ENCODE measurements at regions of chr20 and their contacts with region 1.

Region 1: GRCh38 chr20:478949-479429 is 16.7 kb upstream of the TBC1D20 start:
- DNase-seq: peak in 1 of 10 donors; percentile 18
- H3K4me3 ChIP-seq: no peak overlapping the region
- H3K27ac ChIP-seq: peak overlapping the region in 8 of 59 donors; percentile 4 to 65 (median 16)
- H3K27me3 ChIP-seq: no peaks in the 10 kb centered on the region
- CTCF ChIP-seq: peak; percentile 45 to 87 (median 71)

Region 2: GRCh38 chr20:431012-431904 is 47.7 kb before region 1 on chr20:
- intact Hi-C with region 1: loop called (anchors 5 kb)
- DNase-seq: peak; percentile 69 to 94 (median 84)
- H3K4me3 ChIP-seq: no peak overlapping the region
- H3K27ac ChIP-seq: peak overlapping the region in 48 of 59 donors; percentile 2 to 81 (median 54)
- H3K27me3 ChIP-seq: no peaks in the 10 kb centered on the region
- CTCF ChIP-seq: peak; percentile 55 to 97 (median 88)

Region 3: DNA sequence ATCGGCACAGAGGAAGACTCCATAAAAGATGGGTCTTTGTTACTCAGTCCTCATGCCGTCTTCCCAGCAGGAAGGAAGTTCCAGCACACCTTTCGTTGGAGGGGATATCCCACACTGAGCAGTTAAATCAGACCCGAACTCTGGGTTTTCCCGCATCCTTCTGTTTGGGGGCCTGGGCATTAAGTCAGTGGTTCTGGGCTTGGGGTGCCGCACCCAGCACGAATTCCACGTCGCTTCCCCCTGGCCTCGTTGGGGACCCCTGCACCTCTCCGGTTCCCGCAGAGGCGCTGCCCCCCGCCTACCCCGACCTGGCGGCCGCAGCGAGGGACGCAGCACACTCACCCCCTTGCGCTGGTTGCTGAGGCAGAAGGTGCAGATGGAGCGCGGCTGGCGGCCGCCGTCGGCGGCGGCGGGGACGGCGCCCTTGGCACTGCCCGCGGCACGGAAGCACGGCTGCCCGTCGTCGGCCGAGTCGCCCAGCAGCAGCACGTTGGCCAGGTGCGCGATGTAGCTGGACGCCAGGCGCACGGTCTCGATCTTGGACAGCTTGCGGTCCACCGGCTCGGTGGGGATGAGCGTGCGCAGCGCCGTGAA is 130.5 kb after region 1 on chr20:
- intact Hi-C with region 1: no loop called
- DNase-seq: no peak
- H3K4me3 ChIP-seq: peak overlapping the region in 44 of 59 donors; percentile 5 to 58 (median 31)
- H3K27ac ChIP-seq: no peak overlapping the region
- H3K27me3 ChIP-seq: peaks cover 0 to 55% (median 35%) of the 10 kb centered on the region in 45 donors
- CTCF ChIP-seq: no peak

Region 4: GRCh38 chr20:728248-728944 is 249.4 kb after region 1 on chr20:
- intact Hi-C with region 1: no loop called
- DNase-seq: peak in 8 of 10 donors; percentile 21 to 74 (median 64)
- H3K4me3 ChIP-seq: peak overlapping the region; percentile 8 to 74 (median 60)
- H3K27ac ChIP-seq: peak overlapping the region in 3 of 59 donors; percentile 44 to 68 (median 46)
- H3K27me3 ChIP-seq: peaks cover 0 to 57% (median 10%) of the 10 kb centered on the region in 45 donors
- CTCF ChIP-seq: peak; percentile 17 to 73 (median 61)

Region 5: DNA sequence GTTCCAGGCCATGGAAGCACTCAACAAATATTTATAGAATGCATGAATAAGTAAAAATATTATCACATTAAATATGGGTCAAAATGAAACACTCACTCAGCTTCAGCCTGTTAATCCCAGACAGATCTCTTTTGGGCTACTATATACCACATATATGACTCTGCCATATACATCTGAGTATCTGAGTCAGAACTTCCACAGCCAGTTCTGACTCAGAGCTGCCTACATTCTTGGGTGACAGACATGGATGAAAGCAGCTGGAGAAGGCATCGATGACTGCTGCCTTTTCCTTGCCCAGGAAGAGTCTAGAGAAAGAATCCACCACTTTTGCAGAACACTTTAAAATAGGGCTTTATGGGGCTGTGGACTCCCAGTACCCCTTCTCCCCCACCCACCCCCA is 1526.4 kb after region 1 on chr20:
- intact Hi-C with region 1: no loop called
- DNase-seq: no peak
- H3K4me3 ChIP-seq: no peak overlapping the region
- H3K27ac ChIP-seq: no peak overlapping the region
- H3K27me3 ChIP-seq: peaks cover 0 to 7% (median 0%) of the 10 kb centered on the region in 45 donors
- CTCF ChIP-seq: no peak